ENCODE measurements at regions of chr17 and their contacts with region 1.

Region 1: GRCh38 chr17:6473128-6473767 is 29.0 kb downstream of the PIMREG start:
- DNase-seq: peak; percentile 80
- H3K4me3 Mint-ChIP-seq: no peak overlapping the region
- H3K27ac Mint-ChIP-seq: no peak overlapping the region
- H3K4me1 Mint-ChIP-seq: no peaks in the 10 kb centered on the region
- H3K27me3 Mint-ChIP-seq: peaks cover 10% of the 10 kb centered on the region

Region 2: DNA sequence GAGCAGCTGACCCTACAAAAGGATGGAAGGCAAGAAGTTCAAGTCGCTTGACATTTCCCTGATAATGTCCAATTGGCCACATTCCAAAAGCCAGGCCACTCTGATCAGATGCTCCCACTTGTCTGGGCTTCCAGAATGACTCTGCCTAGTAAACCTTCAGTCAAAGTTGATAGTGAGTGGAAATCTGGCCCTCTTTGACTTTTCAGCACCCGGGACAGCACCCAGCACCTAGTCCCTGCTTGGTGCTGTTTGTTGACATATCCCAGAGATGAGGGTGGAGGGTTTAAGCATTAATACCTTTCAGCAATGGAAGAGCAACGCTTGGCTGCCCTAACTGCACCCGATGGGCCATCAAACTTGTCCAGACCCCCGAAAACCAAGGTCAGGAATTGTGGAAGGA is 169.6 kb before region 1 on chr17:
- CTCF ChIA-PET with region 1: no interaction called
- DNase-seq: peak; percentile 62
- H3K4me3 Mint-ChIP-seq: no peak overlapping the region
- H3K27ac Mint-ChIP-seq: no peak overlapping the region
- H3K4me1 Mint-ChIP-seq: no peaks in the 10 kb centered on the region
- H3K27me3 Mint-ChIP-seq: peaks cover 7% of the 10 kb centered on the region

Region 3: GRCh38 chr17:6366221-6366666 is 107.0 kb before region 1 on chr17:
- CTCF ChIA-PET with region 1: no interaction called
- DNase-seq: no peak
- H3K4me3 Mint-ChIP-seq: no peak overlapping the region
- H3K27ac Mint-ChIP-seq: no peak overlapping the region
- H3K4me1 Mint-ChIP-seq: no peaks in the 10 kb centered on the region
- H3K27me3 Mint-ChIP-seq: peaks cover 42% of the 10 kb centered on the region

Region 4: GRCh38 chr17:6413065-6413464 is 60.2 kb before region 1 on chr17:
- CTCF ChIA-PET with region 1: no interaction called
- DNase-seq: no peak
- H3K4me3 Mint-ChIP-seq: no peak overlapping the region
- H3K27ac Mint-ChIP-seq: no peak overlapping the region
- H3K4me1 Mint-ChIP-seq: no peaks in the 10 kb centered on the region
- H3K27me3 Mint-ChIP-seq: peaks cover 41% of the 10 kb centered on the region

Region 5: GRCh38 chr17:6523330-6523729 is 50.1 kb after region 1 on chr17:
- CTCF ChIA-PET with region 1: no interaction called
- DNase-seq: no peak
- H3K4me3 Mint-ChIP-seq: no peak overlapping the region
- H3K27ac Mint-ChIP-seq: no peak overlapping the region
- H3K4me1 Mint-ChIP-seq: no peaks in the 10 kb centered on the region
- H3K27me3 Mint-ChIP-seq: no peaks in the 10 kb centered on the region

Region 6: GRCh38 chr17:6648181-6648580 is 174.9 kb after region 1 on chr17:
- CTCF ChIA-PET with region 1: interaction called, 17 read pairs
- DNase-seq: no peak
- H3K4me3 Mint-ChIP-seq: no peak overlapping the region
- H3K27ac Mint-ChIP-seq: peak overlapping the region; percentile 75
- H3K4me1 Mint-ChIP-seq: peaks cover 73% of the 10 kb centered on the region
- H3K27me3 Mint-ChIP-seq: no peaks in the 10 kb centered on the region